ENCODE measurements at regions of chr7 and their contacts with region 1.

Region 1: DNA sequence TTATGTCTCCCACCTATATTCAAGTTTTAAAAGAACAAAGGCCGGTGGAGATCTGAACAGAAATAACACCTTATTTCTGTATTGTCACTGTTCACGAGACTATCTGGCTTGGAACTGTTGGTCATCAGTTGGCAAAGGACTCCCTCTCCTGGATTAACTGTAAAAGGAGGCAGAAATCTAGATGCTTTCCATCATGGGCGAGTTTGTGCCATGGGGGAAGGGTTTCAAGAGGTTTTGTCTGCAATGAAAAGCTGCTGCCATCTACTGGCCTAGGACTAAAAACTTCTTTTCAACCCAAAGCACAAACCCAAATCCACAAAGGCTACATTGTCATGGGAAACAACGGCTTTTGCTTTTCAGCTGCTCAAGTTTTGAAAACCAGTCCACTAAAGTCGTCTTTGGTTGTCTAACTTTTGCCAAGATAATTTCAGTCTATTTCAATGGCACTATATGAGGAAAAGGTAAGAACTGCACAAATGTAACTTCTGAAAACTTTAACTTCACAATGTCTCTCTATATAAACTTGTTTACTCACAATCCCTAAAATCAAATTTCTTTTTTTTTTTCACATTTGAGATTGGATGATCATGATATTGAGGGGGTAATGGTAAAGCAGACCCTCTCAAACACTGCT is 196.8 kb downstream of the SKAP2 start:
- DNase-seq: peak; percentile 71
- H3K4me3 ChIP-seq: peak overlapping the region in 1 of 2 experiments; percentile 21; a peak in 1 of 4 replicates
- H3K27ac ChIP-seq: no peak overlapping the region
- H3K4me1 ChIP-seq: peaks cover 0 to 3% of the 10 kb centered on the region in 2 experiments; a peak in 1 of 4 replicates
- H3K27me3 ChIP-seq: no peaks in the 10 kb centered on the region; the same call in 1 of the 2 replicates
- CTCF ChIP-seq: peak; percentile 98
- EP300 ChIP-seq: peak in 1 of 2 experiments; percentile 53; a peak in 1 of 4 replicates
- RAD21 ChIP-seq: peak; percentile 100

Region 2: GRCh38 chr7:26090927-26091519 is 576.6 kb before region 1 on chr7:
- CTCF ChIA-PET with region 1: interaction called, 13 read pairs
- POLR2A ChIA-PET with region 1: no interaction called
- DNase-seq: peak; percentile 80
- H3K4me3 ChIP-seq: no peak overlapping the region
- H3K27ac ChIP-seq: no peak overlapping the region
- H3K4me1 ChIP-seq: peaks cover 0 to 2% of the 10 kb centered on the region in 2 experiments; a peak in 2 of 4 replicates
- H3K27me3 ChIP-seq: no peaks in the 10 kb centered on the region
- CTCF ChIP-seq: peak; percentile 97
- EP300 ChIP-seq: no peak
- RAD21 ChIP-seq: peak; percentile 94

Region 3: DNA sequence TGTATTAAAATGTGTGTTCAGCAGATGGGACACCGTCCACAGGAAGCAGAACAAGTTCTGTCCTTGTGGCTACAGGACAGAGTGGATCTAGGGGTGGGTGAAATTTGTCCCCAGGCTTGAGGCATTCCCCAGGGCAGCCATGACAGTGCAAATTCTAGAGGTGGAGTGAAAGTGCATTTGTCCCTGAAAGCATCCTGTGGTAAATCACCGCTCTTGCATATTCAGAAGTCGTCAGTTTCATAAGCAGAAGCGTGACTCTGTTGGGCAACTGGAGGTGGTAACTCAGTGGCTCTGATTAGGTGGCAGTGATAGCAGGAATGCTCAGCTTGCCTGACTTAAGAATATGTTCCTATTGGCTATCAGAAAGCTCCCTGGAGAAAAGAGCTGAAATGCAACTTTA is 279.4 kb before region 1 on chr7:
- CTCF ChIA-PET with region 1: interaction called, 50 read pairs
- POLR2A ChIA-PET with region 1: no interaction called
- DNase-seq: no peak
- H3K4me3 ChIP-seq: no peak overlapping the region
- H3K27ac ChIP-seq: no peak overlapping the region
- H3K4me1 ChIP-seq: no peaks in the 10 kb centered on the region
- H3K27me3 ChIP-seq: peaks cover 5% of the 10 kb centered on the region; the same call in 1 of the 2 replicates
- CTCF ChIP-seq: no peak
- EP300 ChIP-seq: no peak
- RAD21 ChIP-seq: no peak

Region 4: DNA sequence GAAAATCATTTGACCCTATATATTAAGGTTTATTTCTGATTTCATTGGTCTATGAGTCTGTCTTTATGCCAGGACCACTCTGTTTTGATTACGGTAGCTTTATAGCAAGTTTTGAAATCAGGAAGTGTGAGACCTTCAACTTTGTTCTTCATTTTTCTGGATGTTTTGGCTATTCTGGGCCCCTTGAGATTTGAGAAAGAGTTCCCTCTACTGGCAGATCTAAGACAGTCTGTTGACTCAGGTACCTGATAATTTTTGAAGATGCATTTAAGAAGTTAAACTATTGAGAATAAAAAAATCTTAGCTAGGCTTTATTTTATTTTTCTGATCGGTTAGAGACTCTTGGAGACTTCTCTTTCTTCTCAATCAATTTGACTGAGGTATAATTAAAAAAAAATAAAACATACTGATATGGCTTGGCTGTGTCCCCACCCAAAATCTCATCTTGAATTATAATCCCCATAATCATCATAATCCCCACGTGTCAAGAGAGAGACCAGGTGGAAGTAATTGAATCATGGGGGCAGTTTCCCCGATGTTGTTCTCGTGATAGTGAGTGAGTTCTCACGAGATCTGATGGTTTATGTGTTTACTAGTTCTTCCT is 166.8 kb before region 1 on chr7:
- CTCF ChIA-PET with region 1: interaction called, 24 read pairs
- POLR2A ChIA-PET with region 1: no interaction called
- DNase-seq: peak; percentile 55
- H3K4me3 ChIP-seq: no peak overlapping the region; a peak in 1 of 4 replicates
- H3K27ac ChIP-seq: no peak overlapping the region
- H3K4me1 ChIP-seq: no peaks in the 10 kb centered on the region
- H3K27me3 ChIP-seq: no peaks in the 10 kb centered on the region; the same call in 1 of the 2 replicates
- CTCF ChIP-seq: peak; percentile 65
- EP300 ChIP-seq: no peak
- RAD21 ChIP-seq: peak; percentile 80

Region 5: GRCh38 chr7:26534649-26535482 is 132.8 kb before region 1 on chr7:
- CTCF ChIA-PET with region 1: interaction called, 27 read pairs
- POLR2A ChIA-PET with region 1: no interaction called
- DNase-seq: no peak
- H3K4me3 ChIP-seq: no peak overlapping the region
- H3K27ac ChIP-seq: peak overlapping the region in 1 of 2 experiments; percentile 79; a peak in 2 of 4 replicates
- H3K4me1 ChIP-seq: peaks cover 0 to 32% of the 10 kb centered on the region in 2 experiments; a peak in 2 of 4 replicates
- H3K27me3 ChIP-seq: no peaks in the 10 kb centered on the region
- CTCF ChIP-seq: no peak
- EP300 ChIP-seq: no peak
- RAD21 ChIP-seq: no peak

Region 6: DNA sequence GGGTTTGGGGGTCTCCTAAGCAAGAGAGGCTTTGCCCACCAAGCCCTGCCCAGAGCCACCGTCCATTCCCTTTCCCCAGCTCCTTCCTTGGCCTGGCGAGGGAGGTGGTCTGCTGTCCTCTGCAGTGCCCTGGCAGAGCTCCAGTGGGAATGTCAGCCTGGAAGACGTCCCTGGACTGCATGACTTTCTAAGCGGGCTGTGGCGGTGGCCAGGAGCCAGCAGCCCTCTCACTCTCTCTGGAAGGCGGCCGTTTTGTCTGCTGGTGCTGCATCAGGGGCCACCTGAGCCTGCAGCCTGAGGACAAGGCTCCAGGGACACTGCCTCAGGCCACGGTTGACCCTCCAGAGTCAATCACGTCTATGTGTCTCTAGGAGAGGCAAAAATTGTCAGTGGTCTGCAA is 74.2 kb before region 1 on chr7:
- CTCF ChIA-PET with region 1: interaction called, 19 read pairs
- POLR2A ChIA-PET with region 1: no interaction called
- DNase-seq: peak; percentile 68
- H3K4me3 ChIP-seq: no peak overlapping the region
- H3K27ac ChIP-seq: peak overlapping the region in 1 of 2 experiments; percentile 60; a peak in 1 of 4 replicates
- H3K4me1 ChIP-seq: peaks cover 0 to 29% of the 10 kb centered on the region in 2 experiments; a peak in 2 of 4 replicates
- H3K27me3 ChIP-seq: no peaks in the 10 kb centered on the region
- CTCF ChIP-seq: no peak
- EP300 ChIP-seq: no peak
- RAD21 ChIP-seq: 0 out of 2 replicates have a peak, but pooled peaks have one; percentile 12

Region 7: DNA sequence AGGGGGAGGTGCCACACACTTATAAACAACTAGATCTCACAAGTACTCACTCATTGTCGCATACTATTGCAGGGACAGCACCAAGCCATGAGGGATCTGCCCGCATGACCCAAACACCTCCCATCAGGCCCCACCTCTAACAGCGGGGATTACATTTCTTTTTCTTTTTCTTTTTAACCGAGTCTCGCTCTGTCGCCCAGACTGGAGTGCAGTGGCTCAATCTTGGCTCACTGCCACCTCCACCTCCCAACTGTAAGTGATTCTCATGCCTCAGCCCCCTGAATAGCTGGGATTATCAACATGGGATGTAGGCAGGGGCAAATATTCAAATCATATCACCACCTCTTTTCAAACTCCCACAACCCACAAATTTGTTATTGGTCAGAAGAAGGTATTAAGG is 120.1 kb after region 1 on chr7:
- CTCF ChIA-PET with region 1: no interaction called
- POLR2A ChIA-PET with region 1: no interaction called
- DNase-seq: no peak
- H3K4me3 ChIP-seq: no peak overlapping the region
- H3K27ac ChIP-seq: no peak overlapping the region
- H3K4me1 ChIP-seq: peaks cover 0 to 5% of the 10 kb centered on the region in 2 experiments; a peak in 2 of 4 replicates
- H3K27me3 ChIP-seq: no peaks in the 10 kb centered on the region
- CTCF ChIP-seq: no peak
- EP300 ChIP-seq: no peak
- RAD21 ChIP-seq: no peak

Region 8: GRCh38 chr7:26841003-26841739 is 173.6 kb after region 1 on chr7:
- CTCF ChIA-PET with region 1: no interaction called
- POLR2A ChIA-PET with region 1: no interaction called
- DNase-seq: no peak
- H3K4me3 ChIP-seq: no peak overlapping the region
- H3K27ac ChIP-seq: no peak overlapping the region
- H3K4me1 ChIP-seq: no peaks in the 10 kb centered on the region; a peak in 1 of 4 replicates
- H3K27me3 ChIP-seq: no peaks in the 10 kb centered on the region
- CTCF ChIP-seq: no peak
- EP300 ChIP-seq: no peak
- RAD21 ChIP-seq: no peak

Measured in SK-N-SH (cell line).